ENCODE measurements at regions of chr13 and their contacts with region 1.

Region 1: GRCh38 chr13:66689628-66690027 is 540.5 kb downstream of the PCDH9 start:
- DNase-seq: peak; percentile 19
- H3K4me3 Mint-ChIP-seq: no peak overlapping the region
- H3K27ac Mint-ChIP-seq: no peak overlapping the region
- H3K4me1 Mint-ChIP-seq: peaks cover 5% of the 10 kb centered on the region
- H3K27me3 Mint-ChIP-seq: no peaks in the 10 kb centered on the region
- CTCF ChIP-seq: peak; percentile 16

Region 2: DNA sequence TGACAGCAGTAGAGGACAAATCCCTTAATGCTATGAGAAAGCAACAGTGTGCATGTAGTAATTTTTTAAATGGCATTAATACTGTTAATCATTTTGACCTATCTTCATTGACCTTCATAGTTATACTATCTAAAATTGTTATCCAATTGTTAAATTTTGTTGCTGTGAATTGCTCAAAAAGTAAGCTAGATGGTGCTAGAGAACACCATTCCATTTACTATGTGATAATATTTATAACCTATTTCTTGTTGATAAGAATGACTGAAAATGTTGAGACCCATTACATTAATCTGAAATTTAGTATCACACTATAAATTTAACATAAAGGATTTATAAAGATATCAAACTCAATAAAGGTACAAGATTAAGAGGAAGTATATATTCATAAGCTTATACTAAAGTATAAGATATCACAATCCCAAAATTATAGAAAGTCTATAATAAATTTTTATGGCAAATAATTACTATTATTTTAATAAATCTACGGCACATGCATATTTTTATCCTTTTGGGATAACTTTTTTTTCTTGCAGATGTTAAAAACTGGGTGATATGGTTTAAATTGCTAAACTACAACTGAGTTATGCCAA is 1032.8 kb before region 1 on chr13:
- CTCF ChIA-PET with region 1: interaction called, 4 read pairs
- POLR2A ChIA-PET with region 1: no interaction called
- intact Hi-C with region 1: loop called (anchors 1 kb)
- DNase-seq: peak; percentile 27
- H3K4me3 Mint-ChIP-seq: no peak overlapping the region
- H3K27ac Mint-ChIP-seq: no peak overlapping the region
- H3K4me1 Mint-ChIP-seq: no peaks in the 10 kb centered on the region
- H3K27me3 Mint-ChIP-seq: no peaks in the 10 kb centered on the region
- CTCF ChIP-seq: peak; percentile 69

Region 3: DNA sequence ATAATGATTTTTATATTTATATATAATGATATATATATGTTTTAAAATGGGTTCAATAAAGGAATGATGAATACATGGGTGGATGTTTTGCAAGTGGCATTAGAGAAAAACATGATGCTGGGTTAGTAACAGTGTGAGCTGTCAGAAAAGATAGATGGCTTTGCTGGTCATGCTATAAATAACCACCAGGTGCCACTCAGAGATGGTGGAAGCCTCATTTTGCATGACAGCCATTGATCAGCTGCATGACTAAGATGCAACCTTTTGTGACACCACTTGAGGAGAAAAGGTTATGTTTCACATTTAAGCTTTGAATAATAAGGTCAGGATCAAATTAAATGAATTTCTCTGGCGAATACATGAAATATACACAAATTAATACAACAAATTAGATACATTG is 197.1 kb before region 1 on chr13:
- CTCF ChIA-PET with region 1: interaction called, 5 read pairs
- POLR2A ChIA-PET with region 1: no interaction called
- intact Hi-C with region 1: loop called (anchors 10 kb)
- DNase-seq: peak; percentile 26
- H3K4me3 Mint-ChIP-seq: no peak overlapping the region
- H3K27ac Mint-ChIP-seq: no peak overlapping the region
- H3K4me1 Mint-ChIP-seq: no peaks in the 10 kb centered on the region
- H3K27me3 Mint-ChIP-seq: no peaks in the 10 kb centered on the region
- CTCF ChIP-seq: peak; percentile 29

Region 4: GRCh38 chr13:66624302-66624701 is 65.3 kb before region 1 on chr13:
- CTCF ChIA-PET with region 1: interaction called, 6 read pairs
- POLR2A ChIA-PET with region 1: no interaction called
- intact Hi-C with region 1: loop called (anchors 5 kb)
- DNase-seq: no peak
- H3K4me3 Mint-ChIP-seq: no peak overlapping the region
- H3K27ac Mint-ChIP-seq: no peak overlapping the region
- H3K4me1 Mint-ChIP-seq: no peaks in the 10 kb centered on the region
- H3K27me3 Mint-ChIP-seq: no peaks in the 10 kb centered on the region
- CTCF ChIP-seq: no peak

Region 5: GRCh38 chr13:66759919-66760318 is 70.3 kb after region 1 on chr13:
- CTCF ChIA-PET with region 1: no interaction called
- POLR2A ChIA-PET with region 1: no interaction called
- intact Hi-C with region 1: no loop called
- DNase-seq: no peak
- H3K4me3 Mint-ChIP-seq: no peak overlapping the region
- H3K27ac Mint-ChIP-seq: no peak overlapping the region
- H3K4me1 Mint-ChIP-seq: no peaks in the 10 kb centered on the region
- H3K27me3 Mint-ChIP-seq: no peaks in the 10 kb centered on the region
- CTCF ChIP-seq: no peak

Region 6: DNA sequence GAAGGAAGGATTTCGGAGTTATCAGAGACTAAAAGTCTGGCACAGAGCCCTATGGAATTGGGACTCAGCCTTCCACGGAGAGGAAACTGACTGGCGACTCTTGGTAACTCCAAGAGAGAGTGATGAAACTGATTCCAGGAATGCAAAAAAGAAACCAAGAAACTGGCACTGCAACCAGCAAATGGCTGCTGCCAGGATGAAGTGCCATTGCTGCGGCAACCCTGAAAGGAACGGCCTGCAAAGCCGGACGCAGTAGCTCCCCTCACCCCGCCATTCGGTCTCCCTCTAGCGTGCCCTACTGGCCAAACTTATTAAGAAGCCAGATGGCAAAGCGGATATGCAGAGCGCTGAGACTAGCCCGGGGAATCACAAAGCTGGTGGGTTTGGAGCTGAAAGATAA is 304.5 kb after region 1 on chr13:
- CTCF ChIA-PET with region 1: interaction called, 4 read pairs
- POLR2A ChIA-PET with region 1: no interaction called
- intact Hi-C with region 1: loop called (anchors 5 kb)
- DNase-seq: peak; percentile 70
- H3K4me3 Mint-ChIP-seq: peak overlapping the region; percentile 46
- H3K27ac Mint-ChIP-seq: peak overlapping the region; percentile 31
- H3K4me1 Mint-ChIP-seq: peaks cover 13% of the 10 kb centered on the region
- H3K27me3 Mint-ChIP-seq: no peaks in the 10 kb centered on the region
- CTCF ChIP-seq: peak; percentile 42

Region 7: DNA sequence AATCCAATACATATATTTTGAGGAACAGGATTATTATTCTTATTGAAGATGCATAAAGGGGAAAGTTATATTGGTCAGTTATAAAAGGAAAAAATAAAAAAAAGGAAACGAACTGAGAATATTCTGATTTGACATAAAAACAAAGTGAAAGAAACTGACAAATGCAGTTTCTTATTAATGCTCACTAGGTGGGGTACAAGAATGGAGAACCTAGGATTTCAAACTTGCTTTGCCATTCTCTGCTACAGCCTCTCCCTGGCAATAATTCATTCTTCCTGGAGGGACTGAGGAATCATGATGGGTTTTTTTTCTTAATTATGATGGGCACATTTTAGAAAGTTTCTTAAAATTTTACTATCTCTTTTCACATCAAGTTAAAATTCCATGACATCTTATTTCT is 385.6 kb after region 1 on chr13:
- CTCF ChIA-PET with region 1: no interaction called
- POLR2A ChIA-PET with region 1: no interaction called
- intact Hi-C with region 1: loop called (anchors 5 kb)
- DNase-seq: peak; percentile 17
- H3K4me3 Mint-ChIP-seq: no peak overlapping the region
- H3K27ac Mint-ChIP-seq: no peak overlapping the region
- H3K4me1 Mint-ChIP-seq: no peaks in the 10 kb centered on the region
- H3K27me3 Mint-ChIP-seq: no peaks in the 10 kb centered on the region
- CTCF ChIP-seq: peak; percentile 20